CD4-positive, alpha-beta memory T cell (primary cell): ENCODE measurements at regions of chr5 and their contacts with region 1.

Region 1: DNA sequence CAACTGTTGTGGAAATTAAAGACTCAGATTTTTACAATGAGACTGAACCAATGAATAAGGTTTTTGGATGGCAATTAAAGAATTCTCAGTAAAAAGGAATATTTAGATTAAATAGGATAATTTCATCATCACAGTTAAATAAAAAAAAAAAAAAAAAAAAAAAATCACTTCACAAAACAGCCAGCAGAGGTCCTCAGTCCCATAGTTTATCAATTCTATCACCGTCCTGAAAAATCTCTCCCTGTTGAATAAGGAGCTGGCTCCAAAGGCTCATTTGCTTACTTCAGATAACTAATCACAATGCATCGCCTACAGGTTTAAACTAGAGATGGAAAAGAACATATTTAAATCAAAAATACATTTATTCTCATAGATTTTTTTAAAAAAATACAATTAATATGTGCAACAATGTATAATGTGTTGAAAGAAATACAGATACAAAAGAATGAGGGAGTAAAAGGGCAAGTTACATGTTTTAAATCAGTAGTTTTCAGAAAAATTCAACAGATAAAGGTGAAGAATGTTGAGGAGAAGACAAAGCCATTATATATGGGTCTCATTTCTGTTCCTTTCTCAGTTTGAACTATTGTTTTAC is 175.8 kb upstream of the CHD1 start:
- DNase-seq: peak in 4 of 5 donors; percentile 6 to 26 (median 18)
- H3K4me3 ChIP-seq: no peak overlapping the region
- H3K4me3 Mint-ChIP-seq: no peak overlapping the region
- H3K27ac ChIP-seq: no peak overlapping the region
- H3K27ac Mint-ChIP-seq: no peak overlapping the region
- H3K4me1 ChIP-seq: no peaks in the 10 kb centered on the region
- H3K4me1 Mint-ChIP-seq: peaks cover 0 to 1% (median under 1%) of the 10 kb centered on the region in 4 donors
- H3K27me3 ChIP-seq: no peaks in the 10 kb centered on the region
- H3K27me3 Mint-ChIP-seq: peaks cover 3 to 8% of the 10 kb centered on the region in 2 donors

Region 2: GRCh38 chr5:101045689-101046088 is 1941.1 kb after region 1 on chr5:
- CTCF ChIA-PET with region 1: no interaction called
- POLR2A ChIA-PET with region 1: no interaction called
- intact Hi-C with region 1: loop called (anchors 2 kb)
- DNase-seq: peak in 4 of 5 donors; percentile 15 to 33 (median 27)
- H3K4me3 ChIP-seq: no peak overlapping the region
- H3K4me3 Mint-ChIP-seq: no peak overlapping the region
- H3K27ac ChIP-seq: no peak overlapping the region
- H3K27ac Mint-ChIP-seq: no peak overlapping the region
- H3K4me1 ChIP-seq: peaks cover 9% of the 10 kb centered on the region
- H3K4me1 Mint-ChIP-seq: peaks cover 5 to 11% (median 7%) of the 10 kb centered on the region in 4 donors
- H3K27me3 ChIP-seq: no peaks in the 10 kb centered on the region
- H3K27me3 Mint-ChIP-seq: no peaks in the 10 kb centered on the region